Thyroid gland (tissue), 4 donors: ENCODE measurements at regions of chr6 and their contacts with region 1.

Region 1: GRCh38 chr6:2999618-3000557 is at the start of gene NQO2:
- DNase-seq: peak; percentile 93 to 94
- H3K4me3 ChIP-seq: peak within 1 kb of the TSS; percentile 56 to 80 (median 73)
- H3K27ac ChIP-seq: peak within 1 kb of the TSS; percentile 73 to 84 (median 77)
- H3K4me1 ChIP-seq: peaks cover 12 to 13% of the 10 kb centered on the region in 2 donors
- H3K27me3 ChIP-seq: no peaks in the 10 kb centered on the region
- CTCF ChIP-seq: peak in 3 of 6 experiments; percentile 2 to 38 (median 9)
- POLR2A ChIP-seq: peak; percentile 68 to 90
- total RNA-seq, gene NQO2: 20.7 to 43.0 (median 36.3) TPM

Region 2: DNA sequence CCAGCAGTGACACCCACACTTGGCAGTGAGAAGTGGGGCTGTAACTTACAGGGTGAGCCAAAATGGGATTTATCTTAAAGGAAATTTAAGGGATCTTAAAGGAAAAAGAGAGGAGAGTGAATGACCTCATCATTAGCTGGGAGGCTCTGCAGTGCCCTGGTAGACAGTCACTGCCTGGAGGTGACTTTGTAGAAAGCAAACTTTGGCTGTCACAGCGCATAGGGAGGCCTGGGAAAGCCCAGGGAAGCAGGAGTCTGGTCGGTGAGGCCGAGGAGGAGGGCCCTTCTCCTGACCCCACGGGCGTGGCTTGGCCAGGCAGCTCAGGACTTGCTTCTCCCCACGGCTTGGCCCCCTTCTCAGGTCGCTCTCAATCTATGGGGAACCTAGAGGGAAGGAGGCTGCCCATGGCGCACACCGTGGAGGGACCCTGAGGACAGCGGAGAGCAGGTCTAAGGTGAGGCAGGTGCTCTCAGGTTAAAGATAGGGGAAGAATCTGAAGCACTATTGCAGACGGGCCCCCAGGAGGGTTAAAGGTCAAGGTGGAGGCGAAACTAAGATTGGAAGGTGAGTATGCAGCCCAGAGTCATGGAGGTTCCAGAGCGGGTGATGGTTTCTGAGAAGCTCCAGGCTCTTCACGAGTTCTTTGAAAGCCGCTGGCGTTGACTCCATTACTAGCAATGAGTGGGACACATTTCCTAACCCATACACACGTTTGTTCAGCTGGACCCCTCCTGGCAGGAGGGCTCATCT is 52.8 kb after region 1 on chr6:
- intact Hi-C with region 1: loop called (anchors 5 kb)
- DNase-seq: no peak
- H3K4me3 ChIP-seq: no peak overlapping the region
- H3K27ac ChIP-seq: no peak overlapping the region
- H3K4me1 ChIP-seq: peaks cover 0 to 15% of the 10 kb centered on the region in 2 donors
- H3K27me3 ChIP-seq: no peaks in the 10 kb centered on the region
- CTCF ChIP-seq: no peak
- POLR2A ChIP-seq: no peak

Region 3: GRCh38 chr6:3068329-3069214 is 68.7 kb after region 1 on chr6 and contains the start of gene RIPK1:
- intact Hi-C with region 1: loop called (anchors 5 kb)
- DNase-seq: peak; percentile 94 to 95
- H3K4me3 ChIP-seq: peak within 1 kb of the TSS; percentile 72 to 95 (median 93)
- H3K27ac ChIP-seq: peak within 1 kb of the TSS; percentile 96 to 100 (median 98)
- H3K4me1 ChIP-seq: peaks cover 28 to 36% of the 10 kb centered on the region in 2 donors
- H3K27me3 ChIP-seq: no peaks in the 10 kb centered on the region
- CTCF ChIP-seq: peak in 3 of 6 experiments; percentile 27 to 37 (median 28)
- POLR2A ChIP-seq: peak; percentile 71 to 93
- total RNA-seq, gene RIPK1: 26.2 to 33.5 (median 29.0) TPM